WTC11 (cell line): ENCODE measurements at regions of chr9 and their contacts with region 1.

Region 1: GRCh38 chr9:109411798-109412352 is 86.2 kb downstream of the PTPN3 start:
- DNase-seq: no peak
- ATAC-seq: no peak; the same call in 1 of the 2 replicates
- H3K4me3 Mint-ChIP-seq: no peak overlapping the region
- H3K27ac Mint-ChIP-seq: peak overlapping the region; percentile 68; the same call in 1 of the 2 replicates
- H3K4me1 Mint-ChIP-seq: peaks cover 61% of the 10 kb centered on the region
- H3K27me3 Mint-ChIP-seq: no peaks in the 10 kb centered on the region
- CTCF ChIP-seq: peak; percentile 41; the same call in 1 of the 2 replicates

Region 2: GRCh38 chr9:109198736-109199379 is 213.0 kb before region 1 on chr9:
- CTCF ChIA-PET with region 1: interaction called, 13 read pairs
- POLR2A ChIA-PET with region 1: no interaction called
- DNase-seq: no peak
- ATAC-seq: peak; percentile 86
- H3K4me3 Mint-ChIP-seq: no peak overlapping the region
- H3K27ac Mint-ChIP-seq: no peak overlapping the region
- H3K4me1 Mint-ChIP-seq: no peaks in the 10 kb centered on the region
- H3K27me3 Mint-ChIP-seq: no peaks in the 10 kb centered on the region
- CTCF ChIP-seq: 0 out of 2 replicates have a peak, but pooled peaks have one; percentile 11

Region 3: DNA sequence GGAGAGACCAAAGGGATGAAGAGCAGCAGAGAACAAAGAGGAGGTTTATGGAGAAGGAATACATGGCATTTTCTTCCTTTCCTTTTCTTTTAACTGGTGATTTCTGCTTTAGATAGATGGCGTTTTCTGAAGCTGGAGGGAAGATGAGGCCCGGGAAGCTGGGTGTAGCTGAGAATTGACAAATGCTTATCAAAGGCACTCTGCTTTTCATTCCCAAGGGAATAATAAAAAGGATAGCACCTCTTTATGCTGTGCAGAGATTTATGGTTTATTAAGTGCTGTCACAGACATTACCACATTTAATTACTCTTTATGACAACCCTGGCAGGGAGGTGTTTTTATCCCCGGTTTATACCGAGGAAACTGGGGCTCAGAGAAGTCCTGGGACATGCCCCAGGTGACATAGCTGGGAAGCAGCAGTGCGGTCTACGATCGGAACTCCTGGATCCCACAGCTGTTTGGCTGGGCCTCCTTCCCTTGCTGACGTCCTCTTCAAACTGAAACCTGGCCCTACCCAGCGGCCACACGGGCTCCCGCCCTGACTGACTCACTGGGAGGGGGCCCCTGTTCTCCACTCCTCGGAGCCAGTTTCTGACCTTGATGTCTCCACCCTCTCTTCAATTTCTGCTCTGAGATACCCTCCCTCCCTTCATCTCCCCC is 82.8 kb before region 1 on chr9:
- CTCF ChIA-PET with region 1: interaction called, 13 read pairs
- POLR2A ChIA-PET with region 1: no interaction called
- DNase-seq: no peak
- ATAC-seq: peak; percentile 54
- H3K4me3 Mint-ChIP-seq: no peak overlapping the region
- H3K27ac Mint-ChIP-seq: no peak overlapping the region
- H3K4me1 Mint-ChIP-seq: peaks cover 17% of the 10 kb centered on the region
- H3K27me3 Mint-ChIP-seq: no peaks in the 10 kb centered on the region; the same call in 1 of the 2 replicates
- CTCF ChIP-seq: no peak

Region 4: DNA sequence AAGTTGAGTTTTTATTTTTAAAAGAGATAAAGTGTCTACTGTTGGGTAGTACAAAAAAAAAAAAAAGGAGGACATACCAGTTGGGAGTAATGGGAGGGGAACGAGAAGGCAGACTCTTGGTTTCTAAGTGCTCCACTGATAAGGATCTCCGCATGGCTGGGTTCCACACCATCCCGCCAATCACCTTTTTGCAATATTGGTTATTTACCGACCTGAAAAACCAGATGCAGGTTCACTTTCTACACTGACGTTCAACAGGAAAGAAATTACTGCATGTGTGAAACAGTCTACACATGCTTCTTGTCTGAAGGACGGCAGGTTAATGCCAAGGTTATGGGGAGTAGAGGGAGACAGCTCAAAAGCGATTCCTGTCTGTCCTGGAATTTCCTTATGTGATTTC is 10.8 kb after region 1 on chr9:
- CTCF ChIA-PET with region 1: interaction called, 50 read pairs
- POLR2A ChIA-PET with region 1: no interaction called
- DNase-seq: no peak
- ATAC-seq: no peak
- H3K4me3 Mint-ChIP-seq: no peak overlapping the region
- H3K27ac Mint-ChIP-seq: no peak overlapping the region
- H3K4me1 Mint-ChIP-seq: peaks cover 15% of the 10 kb centered on the region
- H3K27me3 Mint-ChIP-seq: no peaks in the 10 kb centered on the region
- CTCF ChIP-seq: no peak

Region 5: DNA sequence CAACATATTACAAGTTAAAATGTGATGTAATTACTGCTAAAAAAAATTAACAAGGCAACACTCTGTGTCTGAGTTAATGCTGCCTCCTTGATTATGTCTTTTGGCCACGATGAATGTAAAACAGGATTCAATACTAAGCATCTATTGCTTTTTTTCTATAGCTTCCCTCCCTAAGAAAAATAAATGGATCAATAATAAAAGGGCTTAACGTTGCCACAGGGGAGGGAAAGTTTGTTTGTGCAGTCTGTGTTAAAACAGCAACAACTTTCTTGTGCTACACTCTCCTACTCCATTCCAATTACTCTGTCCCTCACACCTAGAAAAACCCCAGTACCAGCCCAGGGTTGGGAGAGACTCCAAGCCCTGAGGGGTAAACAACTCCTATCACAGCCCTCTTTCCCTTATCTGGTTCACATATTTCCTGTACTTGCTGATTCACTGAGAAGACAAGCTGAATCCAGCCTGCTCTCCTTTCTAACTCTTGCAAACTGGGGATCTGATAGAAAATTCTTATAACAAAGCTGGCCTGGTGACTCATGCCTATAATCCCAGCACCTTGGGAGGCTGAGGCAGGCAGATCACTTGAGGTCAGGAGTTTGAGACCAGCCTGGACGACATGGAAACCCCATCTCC is 41.5 kb after region 1 on chr9:
- CTCF ChIA-PET with region 1: interaction called, 14 read pairs
- POLR2A ChIA-PET with region 1: no interaction called
- DNase-seq: no peak
- ATAC-seq: no peak
- H3K4me3 Mint-ChIP-seq: no peak overlapping the region
- H3K27ac Mint-ChIP-seq: 0 out of 2 replicates have a peak overlapping the region, but pooled peaks have one; percentile 50
- H3K4me1 Mint-ChIP-seq: peaks cover 25% of the 10 kb centered on the region
- H3K27me3 Mint-ChIP-seq: no peaks in the 10 kb centered on the region
- CTCF ChIP-seq: no peak

Region 6: GRCh38 chr9:109476642-109477257 is 64.9 kb after region 1 on chr9:
- CTCF ChIA-PET with region 1: no interaction called
- POLR2A ChIA-PET with region 1: no interaction called
- DNase-seq: no peak
- ATAC-seq: no peak
- H3K4me3 Mint-ChIP-seq: no peak overlapping the region
- H3K27ac Mint-ChIP-seq: no peak overlapping the region; the same call in 1 of the 2 replicates
- H3K4me1 Mint-ChIP-seq: peaks cover 12% of the 10 kb centered on the region
- H3K27me3 Mint-ChIP-seq: no peaks in the 10 kb centered on the region
- CTCF ChIP-seq: no peak